WTC11 (cell line): ENCODE measurements at regions of chr20 and their contacts with region 1.

Region 1: DNA sequence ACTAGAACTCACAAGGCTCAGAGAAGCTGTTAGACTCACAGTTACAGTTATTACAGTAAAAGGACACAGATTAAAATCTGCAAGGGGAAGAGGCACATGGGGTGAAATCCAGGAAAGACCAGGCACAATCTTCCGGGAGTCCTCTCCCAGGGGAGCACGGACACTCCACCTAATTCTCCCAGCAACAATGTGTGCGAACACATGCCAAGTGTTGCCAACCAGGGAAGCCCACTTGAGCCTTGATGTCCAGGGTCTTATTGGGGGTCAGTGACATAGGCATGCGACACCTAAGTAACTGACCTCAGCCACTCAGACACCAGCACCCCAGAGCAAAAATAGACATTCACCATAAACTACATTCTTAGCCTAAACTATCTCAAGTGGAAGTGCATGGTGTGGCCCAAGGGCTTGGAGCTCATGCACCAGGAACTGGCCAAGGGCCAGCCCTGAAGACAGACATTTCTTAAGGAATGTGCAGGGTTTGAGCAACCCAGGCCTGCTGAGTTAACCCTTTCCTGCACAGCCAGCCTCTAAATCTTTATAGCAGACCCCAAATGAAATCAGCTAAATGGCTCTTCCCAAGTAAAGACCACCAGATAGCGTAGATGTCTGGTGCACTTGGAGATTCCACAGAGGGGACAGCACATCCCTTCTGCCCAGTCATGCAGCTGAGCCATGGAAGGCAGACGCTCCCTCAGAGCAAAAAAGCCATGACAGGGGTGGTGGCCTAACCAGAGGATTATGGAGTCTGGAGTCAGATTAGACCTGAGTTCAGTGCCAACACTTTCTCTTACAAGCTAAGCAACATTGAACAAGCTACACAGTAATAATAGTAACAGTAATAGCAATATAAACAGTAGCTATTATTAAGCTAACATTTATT is 222.7 kb downstream of the ZMYND8 start:
- DNase-seq: no peak
- ATAC-seq: no peak
- H3K4me3 Mint-ChIP-seq: no peak overlapping the region
- H3K27ac Mint-ChIP-seq: no peak overlapping the region
- H3K4me1 Mint-ChIP-seq: no peaks in the 10 kb centered on the region
- H3K27me3 Mint-ChIP-seq: no peaks in the 10 kb centered on the region
- CTCF ChIP-seq: no peak

Region 2: DNA sequence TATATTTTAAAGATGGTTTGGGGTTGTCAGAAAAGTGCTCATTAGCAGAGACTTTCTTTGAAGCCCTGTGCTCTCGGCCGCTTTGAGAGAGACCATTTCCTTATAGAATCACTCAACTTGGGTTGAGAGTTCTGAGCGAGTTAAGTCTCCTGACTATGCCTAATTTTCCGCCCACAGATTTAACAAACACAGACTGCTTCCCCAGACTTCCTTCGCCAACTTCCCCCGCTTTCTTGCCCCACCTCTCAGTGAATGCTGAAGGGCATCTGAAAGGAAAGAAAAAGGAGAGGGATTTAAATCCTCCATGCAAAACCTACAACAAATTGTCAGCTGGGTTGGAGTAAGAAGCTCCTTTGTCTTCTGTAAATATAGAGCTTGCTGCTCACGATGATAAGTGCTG is 15.2 kb before region 1 on chr20:
- CTCF ChIA-PET with region 1: no interaction called
- POLR2A ChIA-PET with region 1: interaction called, 14 read pairs
- DNase-seq: no peak
- ATAC-seq: no peak
- H3K4me3 Mint-ChIP-seq: no peak overlapping the region
- H3K27ac Mint-ChIP-seq: no peak overlapping the region
- H3K4me1 Mint-ChIP-seq: peaks cover 27% of the 10 kb centered on the region
- H3K27me3 Mint-ChIP-seq: no peaks in the 10 kb centered on the region; the same call in 1 of the 2 replicates
- CTCF ChIP-seq: no peak